Activated CD4-positive, alpha-beta memory T cell treated with anti-CD3 and anti-CD28 coated beads for 36 hours (primary cell): ENCODE measurements at regions of chr2 and their contacts with region 1.

Region 1: GRCh38 chr2:86464652-86465051 is 23.5 kb downstream of the KDM3A start:
- DNase-seq: peak; percentile 58
- H3K4me3 Mint-ChIP-seq: no peak overlapping the region
- H3K27ac Mint-ChIP-seq: peak overlapping the region; percentile 66
- H3K4me1 Mint-ChIP-seq: peaks cover 56% of the 10 kb centered on the region
- H3K27me3 Mint-ChIP-seq: no peaks in the 10 kb centered on the region

Region 2: GRCh38 chr2:86396291-86396785 is 68.3 kb before region 1 on chr2:
- CTCF ChIA-PET with region 1: no interaction called
- POLR2A ChIA-PET with region 1: no interaction called
- intact Hi-C with region 1: loop called (anchors 10 kb)
- DNase-seq: peak; percentile 35
- H3K4me3 Mint-ChIP-seq: no peak overlapping the region
- H3K27ac Mint-ChIP-seq: no peak overlapping the region
- H3K4me1 Mint-ChIP-seq: peaks cover 11% of the 10 kb centered on the region
- H3K27me3 Mint-ChIP-seq: peaks cover 4% of the 10 kb centered on the region